HEK293 (cell line): ENCODE measurements at regions of chr15 and their contacts with region 1.

Region 1: DNA sequence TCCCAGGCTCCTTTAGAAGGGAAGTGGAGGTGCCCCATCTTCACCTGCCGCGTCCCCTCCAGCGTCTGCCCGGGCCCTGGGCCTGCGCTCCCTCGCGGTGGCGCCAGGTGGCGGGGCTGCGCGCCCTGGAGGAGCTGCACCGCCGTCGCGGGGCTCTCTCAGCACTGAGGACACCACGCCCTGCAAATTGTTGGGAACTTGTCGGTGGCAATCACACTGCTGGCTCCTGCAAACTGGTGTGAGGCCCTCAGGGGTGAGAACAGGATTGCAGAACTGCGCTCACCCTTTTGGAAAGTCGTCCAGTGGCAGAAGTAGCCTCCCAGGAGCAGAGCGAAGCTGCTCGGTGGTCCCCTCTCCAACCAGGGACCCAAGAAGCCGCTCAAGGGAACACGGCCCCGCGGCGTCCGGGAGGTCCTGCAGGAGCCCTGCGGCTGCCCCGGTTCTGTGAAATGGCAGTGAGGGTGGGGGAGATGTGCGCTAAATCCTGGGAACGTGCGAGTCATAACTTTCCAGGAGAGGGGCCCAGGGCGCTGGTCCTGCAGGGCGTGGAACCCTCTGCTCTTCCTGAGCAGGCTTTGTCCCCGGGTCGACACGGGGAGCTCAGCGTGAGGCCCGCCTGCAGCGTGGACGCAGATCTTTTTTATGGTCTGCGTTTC is 995 bp upstream of the LRRK1 start:
- H3K4me3 ChIP-seq: no peak overlapping the region
- H3K27ac ChIP-seq: no peak overlapping the region
- H3K4me1 ChIP-seq: no peaks in the 10 kb centered on the region; the same call in 1 of the 2 replicates
- CTCF ChIP-seq: peak; percentile 66

Region 2: DNA sequence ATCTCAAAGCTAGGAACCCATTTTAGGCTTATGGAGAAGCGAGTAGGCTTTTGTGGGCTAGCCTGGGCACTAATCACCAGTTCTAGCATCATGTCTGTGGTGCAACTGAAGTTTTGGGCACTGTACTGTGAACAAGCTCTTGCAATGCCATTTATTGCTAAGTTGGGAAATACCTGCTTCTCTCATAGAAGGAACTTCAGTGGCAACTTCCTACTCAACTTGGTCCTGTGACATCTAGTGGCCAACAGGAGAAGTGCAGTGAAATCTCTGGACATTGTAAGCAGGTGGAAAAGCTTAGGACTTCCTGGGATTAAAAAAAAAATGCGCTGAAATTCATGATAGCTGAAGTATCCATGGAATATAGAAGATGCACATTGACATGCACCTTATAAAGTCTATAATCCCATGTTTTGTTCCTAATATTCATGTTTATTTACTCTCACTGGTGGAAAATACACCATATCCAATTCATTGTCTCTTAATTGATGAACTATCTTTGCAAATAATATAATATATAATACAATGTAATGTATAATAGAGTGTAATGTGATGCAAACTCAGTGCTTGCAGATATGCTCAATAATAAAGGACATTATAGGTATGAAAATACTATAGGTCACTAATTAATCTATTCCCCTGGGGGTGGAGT is 45.0 kb before region 1 on chr15:
- CTCF ChIA-PET with region 1: interaction called, 20 read pairs
- POLR2A ChIA-PET with region 1: no interaction called
- H3K4me3 ChIP-seq: no peak overlapping the region
- H3K27ac ChIP-seq: no peak overlapping the region
- H3K4me1 ChIP-seq: no peaks in the 10 kb centered on the region
- CTCF ChIP-seq: 0 out of 2 replicates have a peak, but pooled peaks have one; percentile 22

Region 3: GRCh38 chr15:100879464-100880138 is 38.6 kb before region 1 on chr15 and contains the start of gene ALDH1A3:
- CTCF ChIA-PET with region 1: interaction called, 16 read pairs
- POLR2A ChIA-PET with region 1: interaction called, 6 read pairs
- H3K4me3 ChIP-seq: peak within 1 kb of the TSS; percentile 52
- H3K27ac ChIP-seq: peak within 1 kb of the TSS; percentile 63; the same call in 1 of the 2 replicates
- H3K4me1 ChIP-seq: peaks cover 3% of the 10 kb centered on the region
- CTCF ChIP-seq: no peak

Region 4: GRCh38 chr15:100897080-100897872 is 20.9 kb before region 1 on chr15:
- CTCF ChIA-PET with region 1: interaction called, 14 read pairs
- POLR2A ChIA-PET with region 1: no interaction called
- H3K4me3 ChIP-seq: no peak overlapping the region
- H3K27ac ChIP-seq: no peak overlapping the region
- H3K4me1 ChIP-seq: no peaks in the 10 kb centered on the region
- CTCF ChIP-seq: no peak

Region 5: DNA sequence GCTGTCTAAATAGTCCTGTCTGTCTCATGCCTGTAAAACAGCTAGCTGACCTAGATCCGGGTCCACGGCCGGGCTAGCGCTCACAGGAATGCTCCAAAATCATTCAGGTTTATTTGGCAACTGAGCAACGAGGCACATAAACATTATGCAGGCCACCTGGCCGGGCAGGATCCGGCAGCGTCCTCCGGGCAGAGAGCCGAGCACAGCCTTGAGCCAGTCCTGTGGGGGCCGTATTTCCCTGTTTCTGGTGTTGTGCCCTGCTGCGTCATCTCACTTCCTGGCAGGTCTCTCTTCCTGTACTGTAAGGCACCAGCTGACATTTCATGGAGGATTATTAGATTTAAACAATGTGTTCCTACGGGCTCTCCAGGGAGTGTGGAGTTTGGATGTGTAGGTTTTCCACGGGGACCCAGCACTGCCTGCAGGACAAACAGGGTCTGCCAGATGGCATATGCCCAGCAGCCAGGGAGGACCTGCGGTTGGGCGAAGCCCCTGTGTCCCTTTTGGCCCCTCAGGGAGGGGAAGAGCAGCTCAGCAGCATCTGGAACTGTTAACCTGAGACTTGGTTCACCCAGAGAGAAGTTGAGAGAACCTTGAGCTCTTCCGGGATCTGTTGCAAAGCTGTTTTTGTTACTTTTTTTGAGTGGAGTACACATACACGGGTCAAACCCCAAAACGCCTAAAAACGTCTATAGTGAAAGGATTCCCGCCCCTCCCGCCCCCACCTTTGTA is 15.6 kb before region 1 on chr15:
- CTCF ChIA-PET with region 1: interaction called, 23 read pairs
- POLR2A ChIA-PET with region 1: no interaction called
- H3K4me3 ChIP-seq: no peak overlapping the region
- H3K27ac ChIP-seq: no peak overlapping the region
- H3K4me1 ChIP-seq: no peaks in the 10 kb centered on the region
- CTCF ChIP-seq: no peak

Region 6: GRCh38 chr15:100944244-100944895 is 26.2 kb after region 1 on chr15:
- CTCF ChIA-PET with region 1: interaction called, 15 read pairs
- POLR2A ChIA-PET with region 1: no interaction called
- H3K4me3 ChIP-seq: no peak overlapping the region
- H3K27ac ChIP-seq: no peak overlapping the region
- H3K4me1 ChIP-seq: no peaks in the 10 kb centered on the region
- CTCF ChIP-seq: no peak

Region 7: GRCh38 chr15:101000271-101000681 is 82.1 kb after region 1 on chr15:
- CTCF ChIA-PET with region 1: interaction called, 159 read pairs
- POLR2A ChIA-PET with region 1: no interaction called
- H3K4me3 ChIP-seq: no peak overlapping the region
- H3K27ac ChIP-seq: no peak overlapping the region
- H3K4me1 ChIP-seq: no peaks in the 10 kb centered on the region
- CTCF ChIP-seq: no peak